Spleen (tissue), 13 donors: ENCODE measurements at regions of chr10 and their contacts with region 1.

Region 1: GRCh38 chr10:103451831-103452505 is at the start of gene CALHM2:
- DNase-seq: peak; percentile 92
- H3K4me3 ChIP-seq: peak within 1 kb of the TSS; percentile 66 to 89 (median 82)
- H3K27ac ChIP-seq: peak within 1 kb of the TSS; percentile 83 to 92 (median 90)
- H3K4me1 ChIP-seq: peaks cover 38 to 75% (median 62%) of the 10 kb centered on the region in 6 donors
- H3K27me3 ChIP-seq: peaks cover 0 to 7% (median 0%) of the 10 kb centered on the region in 7 donors
- CTCF ChIP-seq: no peak
- POLR2A ChIP-seq: no peak
- total RNA-seq, gene CALHM2: 36.8 to 91.6 (median 68.6) TPM

Region 2: GRCh38 chr10:103416436-103417147 is 35.4 kb before region 1 on chr10:
- intact Hi-C with region 1: loop called (anchors 5 kb)
- DNase-seq: no peak
- H3K4me3 ChIP-seq: no peak overlapping the region
- H3K27ac ChIP-seq: no peak overlapping the region
- H3K4me1 ChIP-seq: no peaks in the 10 kb centered on the region
- H3K27me3 ChIP-seq: no peaks in the 10 kb centered on the region
- CTCF ChIP-seq: peak; percentile 15 to 87 (median 67)
- POLR2A ChIP-seq: no peak

Region 3: GRCh38 chr10:103605359-103606095 is 153.6 kb after region 1 on chr10:
- intact Hi-C with region 1: no loop called
- DNase-seq: no peak
- H3K4me3 ChIP-seq: no peak overlapping the region
- H3K27ac ChIP-seq: no peak overlapping the region
- H3K4me1 ChIP-seq: peaks cover 0 to 3% (median 0%) of the 10 kb centered on the region in 6 donors
- H3K27me3 ChIP-seq: no peaks in the 10 kb centered on the region
- CTCF ChIP-seq: peak; percentile 56 to 78 (median 64)
- POLR2A ChIP-seq: no peak